ENCODE measurements at regions of chr12 and their contacts with region 1.

Region 1: DNA sequence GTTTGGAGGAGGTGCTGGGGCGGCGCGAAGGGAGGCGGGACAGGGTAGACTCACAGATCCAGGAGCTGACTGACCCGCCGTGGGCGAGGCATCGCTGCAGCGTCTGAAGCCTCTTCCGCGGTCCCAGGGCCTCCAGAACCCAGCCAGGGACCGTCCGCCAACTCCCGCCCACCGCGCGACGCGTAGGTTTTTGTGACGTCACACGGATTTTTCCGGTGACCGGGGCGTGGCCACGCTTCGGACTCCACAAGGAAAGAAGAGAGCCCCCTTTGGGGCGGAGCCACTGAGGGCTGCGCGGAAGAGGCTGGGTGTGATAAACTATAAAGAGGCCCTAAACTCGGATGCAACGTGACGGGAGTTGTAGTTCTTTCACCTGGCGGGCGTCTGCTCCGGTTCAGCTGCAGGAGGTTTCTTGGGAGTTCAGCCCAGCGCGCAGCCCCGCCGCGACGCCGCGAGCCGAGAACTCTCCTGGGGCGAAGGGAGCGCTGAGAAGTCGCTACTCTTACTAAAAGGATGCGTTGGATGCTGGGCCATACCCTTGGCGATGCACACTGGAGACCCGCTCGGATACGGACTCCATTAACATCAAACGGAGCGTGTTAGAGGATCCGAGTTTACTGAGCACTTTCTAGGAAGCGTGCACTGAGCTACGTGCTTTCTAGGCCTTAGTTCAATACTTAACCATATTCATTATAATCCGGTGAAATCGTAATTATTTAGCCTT is at the start of gene AMN1:
- DNase-seq: peak; percentile 100
- H3K4me3 ChIP-seq: peak within 1 kb of the TSS; percentile 58
- H3K27ac ChIP-seq: peak within 1 kb of the TSS; percentile 94
- H3K4me1 ChIP-seq: peaks cover 4% of the 10 kb centered on the region
- H3K27me3 ChIP-seq: no peaks in the 10 kb centered on the region
- CTCF ChIP-seq: no peak
- total RNA-seq, gene AMN1: 4.4 to 4.8 TPM

Region 2: DNA sequence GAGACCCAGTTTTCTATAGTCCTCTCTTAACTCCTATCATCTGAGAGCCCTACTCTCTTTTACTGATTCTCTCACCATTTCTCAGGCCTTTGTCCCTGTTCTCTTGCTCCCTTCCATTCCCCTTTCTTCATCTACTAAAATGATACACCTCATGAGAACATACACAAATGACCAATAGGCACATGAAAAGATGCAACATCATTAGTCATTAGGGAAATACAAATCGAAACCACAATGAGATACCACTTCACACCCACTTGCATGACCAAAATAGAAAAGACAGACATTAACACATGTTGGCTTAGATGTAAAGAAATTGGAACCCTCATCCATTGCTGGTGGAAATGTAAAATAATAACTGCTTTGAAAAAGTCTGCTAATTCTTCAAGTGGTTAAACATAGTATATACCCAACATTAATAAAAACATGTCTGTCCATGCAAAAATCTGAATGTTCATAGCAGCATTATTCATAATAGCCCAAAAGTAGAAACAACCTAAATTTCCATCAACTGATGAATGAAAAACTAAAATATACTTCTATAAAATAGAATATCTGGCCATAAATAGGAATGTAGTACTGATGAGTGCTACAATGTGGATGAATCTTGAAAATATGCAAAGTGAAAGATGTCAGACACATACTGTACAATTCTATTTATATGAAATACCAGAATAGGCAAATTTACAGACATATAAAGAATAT is 204.1 kb before region 1 on chr12:
- intact Hi-C with region 1: no loop called
- DNase-seq: no peak
- H3K4me3 ChIP-seq: no peak overlapping the region
- H3K27ac ChIP-seq: no peak overlapping the region
- H3K4me1 ChIP-seq: peaks cover 3% of the 10 kb centered on the region
- H3K27me3 ChIP-seq: no peaks in the 10 kb centered on the region
- CTCF ChIP-seq: no peak

Region 3: DNA sequence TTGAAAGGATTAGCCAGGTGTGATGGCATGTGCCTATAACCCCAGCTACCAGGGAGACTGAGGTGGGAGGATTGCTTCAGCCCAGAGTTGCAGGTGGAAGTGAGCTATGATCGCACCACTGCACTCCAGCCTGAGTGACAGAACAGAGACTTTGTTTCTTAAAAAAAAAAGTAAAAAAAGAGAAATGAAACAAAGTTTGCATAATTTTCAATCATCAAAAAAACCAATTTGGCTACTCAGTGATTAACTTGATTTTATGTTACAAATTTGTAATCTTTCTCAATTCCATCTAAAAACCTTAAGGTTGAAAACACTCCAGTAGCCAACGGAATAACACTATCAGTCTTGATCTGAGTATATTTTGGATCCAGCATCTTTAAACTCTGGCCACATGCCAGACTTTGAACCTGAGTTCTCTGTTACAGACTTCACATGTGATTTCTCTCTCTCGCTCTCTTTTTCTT is 125.5 kb before region 1 on chr12:
- intact Hi-C with region 1: no loop called
- DNase-seq: no peak
- H3K4me3 ChIP-seq: no peak overlapping the region
- H3K27ac ChIP-seq: no peak overlapping the region
- H3K4me1 ChIP-seq: no peaks in the 10 kb centered on the region
- H3K27me3 ChIP-seq: no peaks in the 10 kb centered on the region
- CTCF ChIP-seq: no peak

Region 4: GRCh38 chr12:31959161-31959700 is 230.2 kb after region 1 on chr12 and contains the start of gene RESF1:
- intact Hi-C with region 1: loop called (anchors 10 kb)
- DNase-seq: peak; percentile 90
- H3K4me3 ChIP-seq: peak within 1 kb of the TSS; percentile 50
- H3K27ac ChIP-seq: peak within 1 kb of the TSS; percentile 87
- H3K4me1 ChIP-seq: peaks cover 8% of the 10 kb centered on the region
- H3K27me3 ChIP-seq: no peaks in the 10 kb centered on the region
- CTCF ChIP-seq: no peak
- total RNA-seq, gene RESF1: 20.8 to 34.2 TPM